ENCODE measurements at regions of chr10 and their contacts with region 1.

Region 1: GRCh38 chr10:60646966-60647796 is 131.1 kb upstream of the CDK1 start:
- DNase-seq: peak; percentile 27 to 66 (median 45)
- H3K4me3 ChIP-seq: no peak overlapping the region
- H3K4me3 Mint-ChIP-seq: no peak overlapping the region
- H3K27ac ChIP-seq: no peak overlapping the region
- H3K27ac Mint-ChIP-seq: no peak overlapping the region
- H3K4me1 ChIP-seq: no peaks in the 10 kb centered on the region
- H3K4me1 Mint-ChIP-seq: no peaks in the 10 kb centered on the region
- H3K27me3 ChIP-seq: no peaks in the 10 kb centered on the region
- H3K27me3 Mint-ChIP-seq: no peaks in the 10 kb centered on the region
- CTCF ChIP-seq: peak; percentile 80

Region 2: DNA sequence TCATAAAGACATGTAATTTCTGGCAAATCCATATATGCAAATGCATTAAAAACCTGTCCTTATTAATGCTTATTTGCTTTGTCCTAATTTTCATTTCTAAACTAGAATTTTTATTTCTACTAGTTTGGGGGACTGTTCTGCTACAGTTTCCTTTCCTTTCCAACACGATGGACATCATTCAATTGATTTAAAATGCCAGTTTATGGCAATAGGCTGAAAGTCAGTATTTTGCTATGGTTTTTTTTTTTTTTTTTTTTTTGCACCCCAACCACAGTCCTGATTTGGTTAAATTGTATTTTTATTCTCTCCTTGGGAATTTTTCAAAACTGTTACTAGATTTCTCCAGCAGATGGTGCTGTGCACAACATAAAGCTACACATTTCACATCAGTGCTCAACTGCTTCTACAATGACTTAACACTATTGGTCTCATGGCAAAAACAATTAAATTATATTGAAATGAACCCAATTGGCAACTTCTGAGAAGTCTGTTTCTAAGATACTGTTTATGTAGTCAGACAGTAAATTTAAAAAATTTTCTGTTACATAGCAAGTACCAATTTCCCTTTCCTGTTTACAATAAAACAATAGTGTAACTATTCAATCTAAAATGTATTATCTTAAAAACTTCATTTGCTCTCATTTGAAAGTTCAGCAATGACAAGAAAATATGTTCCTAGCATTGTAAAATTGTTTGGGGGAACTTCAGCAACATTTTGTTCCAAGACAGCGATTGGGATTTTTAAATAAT is 547.0 kb before region 1 on chr10:
- intact Hi-C with region 1: loop called (anchors 5 to 10 kb)
- DNase-seq: peak; percentile 7 to 34 (median 34)
- H3K4me3 ChIP-seq: no peak overlapping the region
- H3K4me3 Mint-ChIP-seq: no peak overlapping the region
- H3K27ac ChIP-seq: no peak overlapping the region
- H3K27ac Mint-ChIP-seq: no peak overlapping the region
- H3K4me1 ChIP-seq: no peaks in the 10 kb centered on the region
- H3K4me1 Mint-ChIP-seq: no peaks in the 10 kb centered on the region
- H3K27me3 ChIP-seq: no peaks in the 10 kb centered on the region
- H3K27me3 Mint-ChIP-seq: no peaks in the 10 kb centered on the region
- CTCF ChIP-seq: peak; percentile 86

Region 3: GRCh38 chr10:60208676-60209269 is 438.4 kb before region 1 on chr10:
- intact Hi-C with region 1: loop called in 1 of 2 experiments (anchors 10 kb)
- DNase-seq: no peak
- H3K4me3 ChIP-seq: no peak overlapping the region
- H3K4me3 Mint-ChIP-seq: no peak overlapping the region
- H3K27ac ChIP-seq: no peak overlapping the region
- H3K27ac Mint-ChIP-seq: no peak overlapping the region
- H3K4me1 ChIP-seq: peaks cover 8 to 9% of the 10 kb centered on the region in 2 donors
- H3K4me1 Mint-ChIP-seq: peaks cover 6% of the 10 kb centered on the region
- H3K27me3 ChIP-seq: no peaks in the 10 kb centered on the region
- H3K27me3 Mint-ChIP-seq: peaks cover 0 to 2% (median 0%) of the 10 kb centered on the region in 3 donors
- CTCF ChIP-seq: peak; percentile 60

Region 4: DNA sequence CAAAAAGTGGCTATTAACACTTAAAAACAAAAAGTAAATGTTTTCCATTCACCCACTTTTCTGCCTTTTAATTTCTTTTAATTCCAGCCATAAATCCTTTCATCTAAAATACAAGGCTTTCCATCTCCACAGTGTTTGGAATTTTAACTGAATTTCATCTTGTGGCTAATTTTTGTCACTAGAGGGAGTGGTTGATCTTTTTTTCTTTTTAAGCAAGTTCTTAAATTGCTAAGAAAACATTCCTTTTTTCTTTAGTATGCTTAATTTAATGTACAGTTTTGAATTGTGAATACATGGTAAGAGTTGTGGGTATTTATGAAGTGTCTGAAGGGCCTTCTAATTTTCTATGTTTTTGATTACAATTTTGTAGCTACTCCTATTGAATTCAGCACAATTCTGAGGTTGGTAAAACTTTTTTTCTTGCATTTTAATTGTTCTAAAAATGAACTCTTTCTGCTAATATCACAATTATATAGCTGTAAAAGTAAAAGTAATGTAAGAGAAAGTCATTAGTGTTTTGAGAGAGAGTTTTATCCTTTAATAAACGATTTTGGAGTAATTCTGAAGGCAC is 202.6 kb before region 1 on chr10:
- intact Hi-C with region 1: loop called in 1 of 2 experiments (anchors 10 kb)
- DNase-seq: no peak
- H3K4me3 ChIP-seq: no peak overlapping the region
- H3K4me3 Mint-ChIP-seq: no peak overlapping the region
- H3K27ac ChIP-seq: no peak overlapping the region
- H3K27ac Mint-ChIP-seq: no peak overlapping the region
- H3K4me1 ChIP-seq: peaks cover 5 to 9% of the 10 kb centered on the region in 2 donors
- H3K4me1 Mint-ChIP-seq: peaks cover 11% of the 10 kb centered on the region
- H3K27me3 ChIP-seq: no peaks in the 10 kb centered on the region
- H3K27me3 Mint-ChIP-seq: peaks cover 0 to 6% (median 2%) of the 10 kb centered on the region in 3 donors
- CTCF ChIP-seq: peak; percentile 28